Activated CD4-positive, alpha-beta memory T cell treated with anti-CD3 and anti-CD28 coated beads for 36 hours (primary cell): ENCODE measurements at regions of chr5 and their contacts with region 1.

Region 1: DNA sequence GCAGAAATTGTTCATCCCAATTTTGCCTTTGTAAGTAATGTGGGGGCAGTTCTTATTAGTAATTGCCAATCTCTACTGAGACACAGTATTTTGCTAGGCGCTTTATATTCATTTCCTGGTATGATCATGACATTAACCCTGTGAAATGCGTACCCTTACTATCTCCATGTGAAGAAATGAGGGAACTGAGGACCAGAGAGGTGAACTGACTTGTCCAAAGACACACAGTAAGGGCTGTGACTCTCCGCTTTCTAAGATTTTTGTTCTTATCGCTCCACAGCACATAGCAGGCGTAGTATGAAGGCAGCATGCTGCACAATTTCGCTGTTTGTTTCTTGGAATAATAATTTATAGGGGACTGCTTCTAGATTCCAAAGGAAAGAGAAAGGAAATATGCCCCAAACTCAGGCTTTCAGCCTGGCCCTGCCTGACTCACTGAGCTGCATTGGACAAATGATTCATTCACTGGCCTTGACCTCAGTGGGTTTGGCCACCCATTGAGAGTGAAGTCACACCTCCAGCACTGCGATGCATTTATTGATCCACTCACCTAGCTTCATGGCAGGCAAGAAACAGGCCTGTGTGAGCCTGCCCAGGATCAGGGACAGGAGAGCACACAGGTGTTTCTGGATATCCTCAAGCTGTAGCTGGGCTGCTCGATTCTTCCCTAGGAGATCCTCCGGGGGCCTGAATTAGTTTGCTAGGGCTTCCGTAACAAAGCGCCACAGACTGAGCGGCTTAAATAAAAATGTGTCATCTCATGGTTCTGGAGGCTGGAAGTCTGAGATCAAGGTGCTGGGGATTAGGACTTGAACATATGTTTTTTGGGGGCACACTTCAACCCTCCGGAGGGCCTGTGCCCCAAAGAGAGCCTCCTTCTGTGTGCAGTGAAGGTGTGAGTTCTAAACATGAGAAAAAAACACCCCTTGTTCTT is 7.2 kb upstream of the DUSP1 start:
- DNase-seq: peak; percentile 47
- H3K4me3 Mint-ChIP-seq: peak overlapping the region; percentile 38
- H3K27ac Mint-ChIP-seq: peak overlapping the region; percentile 87
- H3K4me1 Mint-ChIP-seq: peaks cover 61% of the 10 kb centered on the region
- H3K27me3 Mint-ChIP-seq: no peaks in the 10 kb centered on the region

Region 2: GRCh38 chr5:172806897-172807672 is 28.9 kb after region 1 on chr5:
- CTCF ChIA-PET with region 1: interaction called, 4 read pairs
- POLR2A ChIA-PET with region 1: interaction called, 9 read pairs
- intact Hi-C with region 1: loop called (anchors 1 kb)
- DNase-seq: peak; percentile 98
- H3K4me3 Mint-ChIP-seq: peak overlapping the region; percentile 29
- H3K27ac Mint-ChIP-seq: peak overlapping the region; percentile 84
- H3K4me1 Mint-ChIP-seq: peaks cover 17% of the 10 kb centered on the region
- H3K27me3 Mint-ChIP-seq: no peaks in the 10 kb centered on the region